ENCODE measurements at regions of chr10 and their contacts with region 1.

Region 1: GRCh38 chr10:86376852-86377796 is 10.5 kb upstream of the GRID1 start:
- DNase-seq: peak; percentile 28
- ATAC-seq: peak; percentile 99
- H3K4me3 ChIP-seq: no peak overlapping the region
- H3K27ac ChIP-seq: no peak overlapping the region
- H3K4me1 ChIP-seq: no peaks in the 10 kb centered on the region
- H3K27me3 ChIP-seq: peaks cover 48% of the 10 kb centered on the region
- CTCF ChIP-seq: peak; percentile 91
- POLR2A ChIP-seq: no peak; the same call in 1 of the 2 replicates
- RAD21 ChIP-seq: peak; percentile 88

Region 2: GRCh38 chr10:84375011-84375410 is 2002.1 kb before region 1 on chr10:
- CTCF ChIA-PET with region 1: no interaction called
- POLR2A ChIA-PET with region 1: no interaction called
- dilution Hi-C with region 1: no loop called
- in situ Hi-C with region 1: no loop called
- intact Hi-C with region 1: loop called (anchors 5 kb)
- DNase-seq: peak; percentile 69
- ATAC-seq: 0 out of 2 replicates have a peak, but pooled peaks have one; percentile 32
- H3K4me3 ChIP-seq: no peak overlapping the region
- H3K27ac ChIP-seq: no peak overlapping the region
- H3K4me1 ChIP-seq: no peaks in the 10 kb centered on the region
- H3K27me3 ChIP-seq: no peaks in the 10 kb centered on the region
- CTCF ChIP-seq: peak; percentile 66
- POLR2A ChIP-seq: no peak
- RAD21 ChIP-seq: peak; percentile 82

Region 3: DNA sequence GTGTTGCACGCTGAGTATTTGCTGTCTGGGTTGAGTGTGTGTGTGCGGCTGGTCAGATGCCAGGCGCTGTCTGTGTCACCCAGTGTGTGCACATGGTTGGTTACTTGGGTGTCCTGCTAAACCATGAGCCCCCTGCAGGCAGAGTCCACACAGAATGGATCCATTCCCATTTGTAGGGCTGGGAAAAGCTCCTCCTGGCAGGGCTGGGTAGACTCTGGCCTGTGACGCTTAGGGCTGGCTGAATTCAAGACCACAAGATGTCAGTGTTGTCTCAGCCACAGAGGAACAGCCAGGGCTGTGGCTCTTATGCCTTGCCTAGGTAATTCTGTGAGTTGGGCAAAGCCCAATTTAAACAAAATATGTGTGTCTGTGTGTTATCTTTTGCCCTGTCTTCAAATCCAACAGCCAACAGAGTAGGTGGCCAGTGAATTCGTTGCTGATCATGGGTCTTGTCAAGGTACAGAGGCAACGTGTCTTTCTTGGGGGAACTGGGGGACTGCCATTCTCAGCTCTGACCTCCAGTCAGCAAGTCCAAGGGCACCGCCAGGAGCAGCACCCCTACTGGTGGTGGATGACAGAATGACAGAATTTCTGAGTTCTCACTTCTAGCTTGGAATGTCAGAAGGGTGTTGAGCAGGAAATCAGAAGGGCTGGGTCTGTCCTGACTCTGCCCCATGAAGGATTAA is 1763.6 kb before region 1 on chr10:
- CTCF ChIA-PET with region 1: no interaction called
- POLR2A ChIA-PET with region 1: no interaction called
- dilution Hi-C with region 1: no loop called
- in situ Hi-C with region 1: no loop called
- intact Hi-C with region 1: loop called (anchors 2 kb)
- DNase-seq: no peak
- ATAC-seq: no peak; the same call in 1 of the 2 replicates
- H3K4me3 ChIP-seq: no peak overlapping the region
- H3K27ac ChIP-seq: no peak overlapping the region
- H3K4me1 ChIP-seq: no peaks in the 10 kb centered on the region
- H3K27me3 ChIP-seq: no peaks in the 10 kb centered on the region
- CTCF ChIP-seq: peak; percentile 30; the same call in 1 of the 2 replicates
- POLR2A ChIP-seq: no peak
- RAD21 ChIP-seq: peak; percentile 40

Region 4: DNA sequence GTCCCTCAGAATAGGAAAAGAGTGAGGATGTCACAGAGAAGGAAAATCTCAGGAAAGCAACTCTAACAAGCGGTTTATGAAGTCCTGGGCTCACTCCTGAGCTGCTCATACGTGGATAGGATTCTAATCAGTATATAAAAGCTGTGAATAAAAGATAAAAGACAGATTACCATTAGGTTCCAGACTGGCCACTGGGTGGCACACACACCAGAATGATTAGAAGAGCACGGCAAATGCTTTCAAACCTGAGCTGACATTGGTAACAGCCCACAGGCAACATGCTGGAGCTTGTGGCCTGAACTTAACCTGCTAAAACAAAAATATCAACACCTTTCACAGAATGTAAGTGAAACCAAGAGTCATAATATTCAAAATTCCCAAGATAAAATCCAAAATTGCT is 381.3 kb before region 1 on chr10:
- CTCF ChIA-PET with region 1: no interaction called
- POLR2A ChIA-PET with region 1: no interaction called
- dilution Hi-C with region 1: no loop called
- in situ Hi-C with region 1: no loop called
- intact Hi-C with region 1: loop called (anchors 5 kb)
- DNase-seq: peak; percentile 0
- ATAC-seq: no peak
- H3K4me3 ChIP-seq: no peak overlapping the region
- H3K27ac ChIP-seq: no peak overlapping the region
- H3K4me1 ChIP-seq: no peaks in the 10 kb centered on the region
- H3K27me3 ChIP-seq: no peaks in the 10 kb centered on the region
- CTCF ChIP-seq: peak; percentile 37
- POLR2A ChIP-seq: no peak
- RAD21 ChIP-seq: 0 out of 2 replicates have a peak, but pooled peaks have one; percentile 10

Region 5: GRCh38 chr10:86178401-86179152 is 198.5 kb before region 1 on chr10:
- CTCF ChIA-PET with region 1: no interaction called
- POLR2A ChIA-PET with region 1: no interaction called
- dilution Hi-C with region 1: no loop called
- in situ Hi-C with region 1: no loop called
- intact Hi-C with region 1: loop called (anchors 5 kb)
- DNase-seq: no peak
- ATAC-seq: no peak
- H3K4me3 ChIP-seq: no peak overlapping the region
- H3K27ac ChIP-seq: no peak overlapping the region
- H3K4me1 ChIP-seq: no peaks in the 10 kb centered on the region
- H3K27me3 ChIP-seq: no peaks in the 10 kb centered on the region
- CTCF ChIP-seq: peak; percentile 21; the same call in 1 of the 2 replicates
- POLR2A ChIP-seq: no peak
- RAD21 ChIP-seq: no peak

Region 6: GRCh38 chr10:86349474-86349873 is 27.6 kb before region 1 on chr10:
- CTCF ChIA-PET with region 1: no interaction called
- POLR2A ChIA-PET with region 1: no interaction called
- dilution Hi-C with region 1: no loop called
- in situ Hi-C with region 1: no loop called
- intact Hi-C with region 1: loop called (anchors 1 kb)
- DNase-seq: no peak
- ATAC-seq: no peak
- H3K4me3 ChIP-seq: no peak overlapping the region
- H3K27ac ChIP-seq: no peak overlapping the region
- H3K4me1 ChIP-seq: no peaks in the 10 kb centered on the region
- H3K27me3 ChIP-seq: peaks cover 20% of the 10 kb centered on the region
- CTCF ChIP-seq: peak; percentile 35
- POLR2A ChIP-seq: no peak
- RAD21 ChIP-seq: no peak

Measured in IMR-90 (cell line).